ENCODE measurements at regions of chr1 and their contacts with region 1.

Region 1: GRCh38 chr1:201895913-201896807 is 7.5 kb downstream of the SHISA4 start:
- DNase-seq: peak; percentile 78
- H3K4me3 ChIP-seq: no peak overlapping the region
- H3K27ac ChIP-seq: no peak overlapping the region
- H3K4me1 ChIP-seq: peaks cover 21% of the 10 kb centered on the region
- H3K27me3 ChIP-seq: no peaks in the 10 kb centered on the region
- CTCF ChIP-seq: peak; percentile 89 to 98

Region 2: DNA sequence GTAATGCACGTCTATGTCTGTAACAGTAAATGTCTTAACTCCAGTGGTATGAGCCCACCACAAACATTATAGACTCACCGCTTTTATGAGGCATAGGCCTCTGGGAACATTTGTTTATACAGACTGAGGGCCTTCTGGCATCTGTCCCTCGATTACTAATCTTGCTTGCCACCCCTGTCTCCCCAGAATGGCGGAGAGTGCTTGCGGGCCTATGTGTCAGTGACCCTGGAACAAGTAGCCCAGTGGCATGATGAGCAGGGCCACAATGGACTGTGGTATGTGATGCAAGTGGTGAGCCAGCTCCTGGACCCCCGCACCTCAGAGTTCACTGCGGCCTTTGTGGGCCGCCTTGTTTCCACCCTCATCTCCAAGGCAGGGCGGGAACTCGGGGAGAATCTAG is 25.8 kb before region 1 on chr1:
- CTCF ChIA-PET with region 1: no interaction called
- dilution Hi-C with region 1: no loop called
- in situ Hi-C with region 1: no loop called
- intact Hi-C with region 1: no loop called
- DNase-seq: no peak
- H3K4me3 ChIP-seq: no peak overlapping the region
- H3K27ac ChIP-seq: no peak overlapping the region
- H3K4me1 ChIP-seq: no peaks in the 10 kb centered on the region
- H3K27me3 ChIP-seq: no peaks in the 10 kb centered on the region
- CTCF ChIP-seq: no peak

Region 3: DNA sequence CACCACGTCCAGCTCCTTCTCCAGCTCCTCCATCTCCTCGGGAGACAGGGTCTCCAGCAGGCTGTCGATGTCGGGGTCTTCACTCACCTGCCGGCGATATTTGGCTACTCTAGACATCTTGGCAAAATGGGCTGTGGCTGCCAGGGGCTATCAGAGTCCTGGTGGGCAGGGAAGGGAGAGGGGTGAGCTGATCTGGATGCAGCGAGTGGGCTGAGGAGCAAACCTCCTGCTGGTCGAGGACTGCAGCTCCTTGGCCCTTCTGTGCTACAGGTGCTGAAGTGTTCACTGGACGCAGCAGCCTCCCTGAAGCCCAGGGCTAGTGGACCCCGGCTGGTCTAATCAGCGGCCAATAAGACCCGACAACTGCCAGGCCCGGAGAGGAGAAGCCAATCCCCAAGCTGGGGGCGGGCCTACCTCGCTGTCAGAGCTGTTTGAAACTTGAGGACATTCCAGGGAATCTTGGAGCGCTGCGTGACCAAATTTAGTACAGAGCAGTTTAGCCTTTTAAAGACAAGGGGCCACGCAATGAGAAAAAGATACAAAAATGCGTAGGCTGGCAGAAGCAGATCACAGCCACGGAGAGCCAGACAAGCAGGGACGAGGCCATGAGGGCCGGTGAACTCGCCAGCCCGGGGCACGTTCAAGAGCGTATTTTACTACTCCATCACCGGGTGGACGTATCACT is 50.2 kb after region 1 on chr1 and contains the start of gene LMOD1:
- CTCF ChIA-PET with region 1: no interaction called
- dilution Hi-C with region 1: no loop called
- in situ Hi-C with region 1: no loop called
- intact Hi-C with region 1: loop called (anchors 2 kb)
- DNase-seq: peak; percentile 57
- H3K4me3 ChIP-seq: peak within 1 kb of the TSS in 2 of 3 experiments; percentile 5 to 34
- H3K27ac ChIP-seq: no peak within 1 kb of the TSS
- H3K4me1 ChIP-seq: peaks cover 15% of the 10 kb centered on the region
- H3K27me3 ChIP-seq: no peaks in the 10 kb centered on the region
- CTCF ChIP-seq: no peak
- total RNA-seq, gene LMOD1: 29.5 TPM in 1 of 2 donors, not detected in the other

Region 4: GRCh38 chr1:201955009-201955728 is 59.0 kb after region 1 on chr1 and contains the start of gene TIMM17A:
- CTCF ChIA-PET with region 1: no interaction called
- dilution Hi-C with region 1: no loop called
- in situ Hi-C with region 1: no loop called
- intact Hi-C with region 1: loop called (anchors 1 kb)
- DNase-seq: peak; percentile 97
- H3K4me3 ChIP-seq: peak within 1 kb of the TSS; percentile 70 to 92 (median 81)
- H3K27ac ChIP-seq: peak within 1 kb of the TSS; percentile 85
- H3K4me1 ChIP-seq: peaks cover 4% of the 10 kb centered on the region
- H3K27me3 ChIP-seq: no peaks in the 10 kb centered on the region
- CTCF ChIP-seq: no peak
- total RNA-seq, gene TIMM17A: 44.5 to 69.9 TPM

Region 5: DNA sequence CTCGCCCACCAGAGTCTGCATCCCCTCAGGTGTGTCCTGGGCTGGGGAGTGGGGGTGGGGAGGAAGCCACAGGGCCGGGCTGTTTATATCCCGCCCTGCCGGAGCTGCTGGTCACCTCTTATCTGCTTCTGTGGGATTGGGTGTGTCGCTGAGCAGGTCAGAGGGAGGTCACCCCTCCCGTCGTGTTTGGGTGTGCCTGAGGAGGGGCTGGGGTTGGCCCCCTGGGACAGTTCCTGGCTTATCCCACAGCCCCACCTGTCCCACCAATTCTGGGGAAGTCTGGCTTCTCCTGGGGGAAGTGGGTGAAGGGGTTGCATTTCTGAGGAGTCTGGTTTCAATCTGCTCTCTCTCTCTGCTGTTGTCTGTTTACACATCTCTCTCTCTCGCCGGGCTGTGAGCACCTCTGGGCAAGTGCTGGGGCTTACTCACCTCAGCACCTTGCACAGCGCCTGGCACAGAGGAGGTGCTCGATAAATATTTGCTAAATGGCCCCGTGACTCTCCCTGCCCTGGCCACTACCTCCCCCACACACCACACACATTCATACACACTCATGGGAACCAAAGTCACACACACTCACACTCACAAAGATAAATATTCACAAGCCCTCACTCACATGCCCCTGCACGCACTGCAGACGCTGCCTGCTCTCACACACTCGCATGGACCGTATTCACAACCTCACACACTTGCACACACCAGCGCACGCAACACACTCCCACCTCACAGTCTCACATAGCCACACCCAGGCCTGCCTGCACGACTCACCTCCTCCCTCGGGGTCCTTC is 122.5 kb after region 1 on chr1:
- CTCF ChIA-PET with region 1: no interaction called
- dilution Hi-C with region 1: no loop called
- in situ Hi-C with region 1: no loop called
- intact Hi-C with region 1: no loop called
- DNase-seq: peak; percentile 84
- H3K4me3 ChIP-seq: no peak overlapping the region
- H3K27ac ChIP-seq: peak overlapping the region; percentile 22
- H3K4me1 ChIP-seq: peaks cover 44% of the 10 kb centered on the region
- H3K27me3 ChIP-seq: no peaks in the 10 kb centered on the region
- CTCF ChIP-seq: no peak

Region 6: GRCh38 chr1:202112839-202113672 is 216.9 kb after region 1 on chr1:
- CTCF ChIA-PET with region 1: no interaction called
- dilution Hi-C with region 1: no loop called
- in situ Hi-C with region 1: loop called in 1 of 2 experiments (anchors 10 kb)
- intact Hi-C with region 1: no loop called
- DNase-seq: peak; percentile 64
- H3K4me3 ChIP-seq: no peak overlapping the region
- H3K27ac ChIP-seq: peak overlapping the region; percentile 32
- H3K4me1 ChIP-seq: peaks cover 20% of the 10 kb centered on the region
- H3K27me3 ChIP-seq: no peaks in the 10 kb centered on the region
- CTCF ChIP-seq: no peak

Region 7: GRCh38 chr1:202122639-202123335 is 226.6 kb after region 1 on chr1 and contains the start of gene GPR37L1:
- CTCF ChIA-PET with region 1: interaction called, 3 read pairs
- dilution Hi-C with region 1: no loop called
- in situ Hi-C with region 1: loop called (anchors 10 kb)
- intact Hi-C with region 1: loop called (anchors 1 kb)
- DNase-seq: no peak
- H3K4me3 ChIP-seq: no peak within 1 kb of the TSS
- H3K27ac ChIP-seq: no peak within 1 kb of the TSS
- H3K4me1 ChIP-seq: no peaks in the 10 kb centered on the region
- H3K27me3 ChIP-seq: no peaks in the 10 kb centered on the region
- CTCF ChIP-seq: peak in 1 of 2 donors; percentile 26
- total RNA-seq, gene GPR37L1: not detected